SK-N-SH (cell line): ENCODE measurements at regions of chr11 and their contacts with region 1.

Region 1: GRCh38 chr11:8099291-8099899 is 18.4 kb downstream of the TUB start:
- DNase-seq: peak; percentile 69
- H3K4me3 ChIP-seq: no peak overlapping the region; a peak in 1 of 4 replicates
- H3K27ac ChIP-seq: 0 out of 4 replicates have a peak overlapping the region, but pooled peaks of 1 of the 2 experiments have one; percentile 33
- H3K4me1 ChIP-seq: peaks cover 2 to 6% of the 10 kb centered on the region in 2 experiments; a peak in 3 of 4 replicates
- H3K27me3 ChIP-seq: no peaks in the 10 kb centered on the region
- CTCF ChIP-seq: peak; percentile 92
- EP300 ChIP-seq: no peak
- RAD21 ChIP-seq: peak; percentile 80

Region 2: GRCh38 chr11:7986768-7987559 is 112.4 kb before region 1 on chr11 and contains the start of gene EIF3F:
- CTCF ChIA-PET with region 1: interaction called, 10 read pairs
- POLR2A ChIA-PET with region 1: no interaction called
- DNase-seq: peak; percentile 93
- H3K4me3 ChIP-seq: peak within 1 kb of the TSS; percentile 88 to 96
- H3K27ac ChIP-seq: peak within 1 kb of the TSS in 1 of 2 experiments; percentile 52; a peak in 3 of 4 replicates
- H3K4me1 ChIP-seq: peaks cover 7 to 12% of the 10 kb centered on the region in 2 experiments
- H3K27me3 ChIP-seq: no peaks in the 10 kb centered on the region
- CTCF ChIP-seq: peak; percentile 91
- EP300 ChIP-seq: peak; percentile 30 to 46; a peak in 3 of 4 replicates
- RAD21 ChIP-seq: peak; percentile 76
- polyA plus RNA-seq, gene EIF3F: 213 and 341 TPM in 2 replicates

Region 3: GRCh38 chr11:8018484-8019313 is 80.7 kb before region 1 on chr11:
- CTCF ChIA-PET with region 1: interaction called, 32 read pairs
- POLR2A ChIA-PET with region 1: no interaction called
- DNase-seq: peak; percentile 93
- H3K4me3 ChIP-seq: peak overlapping the region; percentile 62 to 72
- H3K27ac ChIP-seq: peak overlapping the region in 1 of 2 experiments; percentile 38; a peak in 2 of 4 replicates
- H3K4me1 ChIP-seq: peaks cover 10 to 16% of the 10 kb centered on the region in 2 experiments; a peak in 3 of 4 replicates
- H3K27me3 ChIP-seq: no peaks in the 10 kb centered on the region
- CTCF ChIP-seq: no peak
- EP300 ChIP-seq: no peak
- RAD21 ChIP-seq: no peak

Region 4: DNA sequence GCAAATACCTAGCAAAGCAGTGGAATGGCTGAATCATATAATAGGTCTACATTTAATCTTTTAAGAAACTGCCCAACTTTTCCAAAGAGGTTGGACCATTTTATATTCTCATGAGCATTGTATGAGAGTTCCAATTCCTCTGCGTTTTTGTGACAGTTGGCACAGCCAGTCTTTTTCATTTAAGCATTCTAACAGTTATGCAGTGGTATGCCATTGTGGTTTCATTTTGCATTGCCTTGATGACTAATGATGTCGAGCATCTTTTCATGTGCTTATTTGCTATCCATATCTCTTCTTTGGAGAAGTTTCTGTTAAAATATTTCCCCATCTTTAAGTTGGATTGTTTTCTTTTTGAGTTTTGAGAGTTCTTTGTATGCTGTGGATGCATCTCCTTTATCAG is 73.6 kb before region 1 on chr11:
- CTCF ChIA-PET with region 1: interaction called, 620 read pairs
- POLR2A ChIA-PET with region 1: no interaction called
- DNase-seq: no peak
- H3K4me3 ChIP-seq: peak overlapping the region in 1 of 2 experiments; percentile 13; a peak in 2 of 4 replicates
- H3K27ac ChIP-seq: peak overlapping the region; percentile 47 to 59; a peak in 3 of 4 replicates
- H3K4me1 ChIP-seq: peaks cover 0 to 4% of the 10 kb centered on the region in 2 experiments; a peak in 1 of 4 replicates
- H3K27me3 ChIP-seq: no peaks in the 10 kb centered on the region
- CTCF ChIP-seq: no peak
- EP300 ChIP-seq: peak in 1 of 2 experiments; percentile 67; a peak in 1 of 4 replicates
- RAD21 ChIP-seq: no peak

Region 5: DNA sequence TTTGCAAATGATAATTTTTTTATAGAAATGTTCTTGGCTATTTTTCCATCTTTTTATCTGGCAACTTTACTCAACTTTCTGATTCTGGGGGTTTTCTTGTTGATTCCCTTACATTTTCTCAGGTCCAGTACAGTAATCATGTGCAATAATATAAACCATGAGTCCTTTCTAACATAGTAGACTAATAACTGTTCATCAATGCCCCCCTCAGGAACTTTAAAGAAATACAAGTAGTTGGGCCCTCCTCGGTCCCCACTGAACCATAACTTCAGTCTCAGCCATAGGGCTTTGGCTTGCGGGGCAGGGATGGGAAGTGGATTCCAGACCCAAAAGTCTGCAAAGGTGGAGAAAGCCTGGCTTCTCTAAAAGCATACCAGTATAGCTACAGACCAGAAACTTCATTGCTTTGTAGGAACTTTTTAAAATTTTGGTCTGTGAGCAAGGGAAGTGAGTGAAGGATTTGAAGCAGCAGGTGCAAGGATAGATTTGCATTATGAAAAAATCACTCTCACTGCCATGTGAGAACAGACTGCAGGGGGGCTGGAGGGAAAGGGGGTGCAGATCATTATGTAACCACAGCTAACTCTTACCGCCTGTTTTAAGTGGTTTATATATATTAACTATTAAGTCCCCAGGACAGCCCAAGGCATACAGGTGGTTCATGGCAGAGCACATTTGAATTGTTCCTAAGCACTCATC is 28.8 kb before region 1 on chr11:
- CTCF ChIA-PET with region 1: interaction called, 75 read pairs
- POLR2A ChIA-PET with region 1: no interaction called
- DNase-seq: peak; percentile 73
- H3K4me3 ChIP-seq: no peak overlapping the region
- H3K27ac ChIP-seq: peak overlapping the region in 1 of 2 experiments; percentile 99; a peak in 2 of 4 replicates
- H3K4me1 ChIP-seq: peaks cover 17 to 50% of the 10 kb centered on the region in 2 experiments
- H3K27me3 ChIP-seq: no peaks in the 10 kb centered on the region; the same call in 1 of the 2 replicates
- CTCF ChIP-seq: peak; percentile 59
- EP300 ChIP-seq: no peak
- RAD21 ChIP-seq: peak; percentile 87

Region 6: GRCh38 chr11:8080674-8081590 is 18.5 kb before region 1 on chr11 and contains the start of gene TUB:
- CTCF ChIA-PET with region 1: interaction called, 176 read pairs
- POLR2A ChIA-PET with region 1: interaction called, 4 read pairs
- DNase-seq: peak; percentile 97
- H3K4me3 ChIP-seq: peak within 1 kb of the TSS; percentile 67 to 73
- H3K27ac ChIP-seq: peak within 1 kb of the TSS in 1 of 2 experiments; percentile 92; a peak in 2 of 4 replicates
- H3K4me1 ChIP-seq: peaks cover 18 to 52% of the 10 kb centered on the region in 2 experiments; a peak in 3 of 4 replicates
- H3K27me3 ChIP-seq: no peaks in the 10 kb centered on the region
- CTCF ChIP-seq: no peak
- EP300 ChIP-seq: no peak
- RAD21 ChIP-seq: no peak
- polyA plus RNA-seq, gene TUB: 11.3 and 16.9 TPM in 2 replicates

Region 7: GRCh38 chr11:8111636-8112035 is 12.2 kb after region 1 on chr11:
- CTCF ChIA-PET with region 1: interaction called, 46 read pairs
- POLR2A ChIA-PET with region 1: no interaction called
- DNase-seq: no peak
- H3K4me3 ChIP-seq: no peak overlapping the region
- H3K27ac ChIP-seq: peak overlapping the region in 1 of 2 experiments; percentile 64; a peak in 2 of 4 replicates
- H3K4me1 ChIP-seq: peaks cover 0 to 13% of the 10 kb centered on the region in 2 experiments; a peak in 2 of 4 replicates
- H3K27me3 ChIP-seq: no peaks in the 10 kb centered on the region
- CTCF ChIP-seq: no peak
- EP300 ChIP-seq: no peak
- RAD21 ChIP-seq: no peak